Right ventricle myocardium inferior (tissue), 1 donor: ENCODE measurements at regions of chr10 and their contacts with region 1.

Region 1: DNA sequence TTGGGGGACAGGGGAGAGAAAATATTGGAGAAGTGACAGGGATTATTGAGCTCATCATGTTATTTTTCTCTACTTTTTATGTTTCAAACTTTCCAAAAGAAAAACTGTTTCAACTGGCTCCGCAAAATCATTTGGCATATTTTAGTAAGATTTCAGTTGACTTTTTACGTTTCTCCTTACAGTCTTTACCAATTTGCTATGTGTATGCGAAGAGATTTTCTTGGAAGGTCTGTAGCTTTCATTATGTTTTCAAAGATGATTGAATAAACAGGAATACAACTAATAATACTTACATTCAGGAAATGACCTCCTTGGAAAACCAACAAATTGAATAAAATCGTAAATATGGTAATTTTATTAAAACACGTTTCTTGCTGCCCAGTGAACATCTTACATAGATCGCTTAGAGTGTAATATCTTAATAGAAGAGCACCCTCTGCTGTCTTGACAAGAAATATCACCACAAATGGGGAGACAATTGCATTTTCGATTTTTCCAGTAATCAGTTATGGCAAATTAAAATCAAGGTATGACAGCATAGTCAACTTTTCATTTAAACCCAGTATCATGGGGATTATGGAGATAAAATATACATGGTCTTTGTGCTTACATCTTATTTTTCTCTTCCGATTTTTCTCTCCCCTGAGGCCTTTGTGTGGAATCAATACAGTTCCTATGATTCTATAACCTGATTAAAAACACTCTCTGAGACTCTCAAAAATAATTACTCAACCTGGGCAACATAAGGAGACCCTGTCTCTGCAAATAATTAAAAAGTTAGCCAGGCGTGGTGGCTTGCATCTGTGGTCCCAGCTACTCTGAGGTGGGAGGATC is 43.1 kb downstream of the MBL2 start:
- DNase-seq: no peak
- ATAC-seq: no peak

Region 2: GRCh38 chr10:52420656-52421055 is 308.8 kb before region 1 on chr10:
- intact Hi-C with region 1: no loop called
- DNase-seq: no peak
- ATAC-seq: no peak

Region 3: DNA sequence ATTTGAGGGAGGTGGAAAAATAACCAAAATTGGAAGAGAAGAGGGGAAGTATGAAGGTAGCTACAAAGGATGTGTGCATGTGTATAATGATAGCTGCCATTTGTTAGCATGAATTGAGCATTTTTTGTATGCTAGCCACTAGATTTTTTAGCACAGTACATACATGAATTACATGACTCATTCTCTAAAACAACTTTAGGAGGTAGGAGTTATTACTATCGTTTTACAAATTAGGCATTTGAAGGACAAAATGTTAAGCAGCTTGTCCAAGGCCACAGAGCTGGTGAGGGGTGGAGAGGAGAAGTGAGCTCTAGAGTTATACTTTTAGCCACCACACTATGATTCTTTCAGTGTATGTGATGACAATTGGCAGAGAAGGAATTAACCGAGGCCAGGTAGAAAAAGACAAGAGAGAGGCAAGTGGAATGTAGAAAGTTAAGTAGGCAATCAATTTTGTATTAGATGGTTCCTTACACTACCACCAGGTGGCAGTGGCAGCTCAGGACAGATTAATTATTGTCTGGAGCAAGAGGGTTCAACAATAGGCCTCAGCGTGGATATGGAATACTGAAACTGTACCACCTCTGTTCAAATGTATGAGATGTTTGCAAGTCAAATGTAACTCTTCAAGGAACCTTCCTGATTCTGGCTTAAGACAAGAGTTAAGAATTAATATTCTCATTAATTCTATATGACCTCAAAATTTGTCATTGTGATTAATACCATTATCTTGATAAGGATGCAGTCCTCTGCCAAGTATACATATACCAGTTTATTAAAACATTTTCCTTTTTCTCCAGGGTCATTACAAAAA is 84.9 kb before region 1 on chr10:
- intact Hi-C with region 1: loop called (anchors 1 kb)
- DNase-seq: no peak
- ATAC-seq: no peak

Region 4: GRCh38 chr10:52807803-52808202 is 78.3 kb after region 1 on chr10:
- intact Hi-C with region 1: no loop called
- DNase-seq: no peak
- ATAC-seq: no peak